CD8-positive, alpha-beta T cell (primary cell): ENCODE measurements at regions of chr18 and their contacts with region 1.

Region 1: GRCh38 chr18:62522504-62523254 is at the start of gene ZCCHC2:
- DNase-seq: peak; percentile 95 to 100 (median 98)
- ATAC-seq: peak; percentile 77
- H3K4me3 ChIP-seq: peak within 1 kb of the TSS; percentile 88 to 89
- H3K4me3 Mint-ChIP-seq: peak within 1 kb of the TSS; percentile 95
- H3K27ac ChIP-seq: peak within 1 kb of the TSS; percentile 86 to 89
- H3K27ac Mint-ChIP-seq: peak within 1 kb of the TSS; percentile 89
- H3K4me1 ChIP-seq: peaks cover 32% of the 10 kb centered on the region
- H3K4me1 Mint-ChIP-seq: peaks cover 37% of the 10 kb centered on the region
- H3K27me3 ChIP-seq: no peaks in the 10 kb centered on the region
- H3K27me3 Mint-ChIP-seq: no peaks in the 10 kb centered on the region
- CTCF ChIP-seq: no peak
- total RNA-seq, gene ZCCHC2: 88.7 to 90.9 TPM

Region 2: GRCh38 chr18:62186774-62187542 is 335.7 kb before region 1 on chr18 and contains the starts of genes PIGN and RELCH:
- CTCF ChIA-PET with region 1: no interaction called
- POLR2A ChIA-PET with region 1: interaction called, 8 read pairs
- intact Hi-C with region 1: loop called (anchors 1 to 5 kb)
- DNase-seq: peak; percentile 89 to 99 (median 93)
- ATAC-seq: peak; percentile 91
- H3K4me3 ChIP-seq: peak within 1 kb of the TSS; percentile 92 to 99
- H3K4me3 Mint-ChIP-seq: peak within 1 kb of the TSS; percentile 100
- H3K27ac ChIP-seq: peak within 1 kb of the TSS; percentile 63 to 79
- H3K27ac Mint-ChIP-seq: peak within 1 kb of the TSS; percentile 97
- H3K4me1 ChIP-seq: peaks cover 43% of the 10 kb centered on the region
- H3K4me1 Mint-ChIP-seq: peaks cover 63% of the 10 kb centered on the region
- H3K27me3 ChIP-seq: no peaks in the 10 kb centered on the region
- H3K27me3 Mint-ChIP-seq: no peaks in the 10 kb centered on the region
- CTCF ChIP-seq: no peak
- total RNA-seq, gene PIGN: 8.1 to 9.9 TPM
- total RNA-seq, gene RELCH: 39.2 to 40.5 TPM

Region 3: DNA sequence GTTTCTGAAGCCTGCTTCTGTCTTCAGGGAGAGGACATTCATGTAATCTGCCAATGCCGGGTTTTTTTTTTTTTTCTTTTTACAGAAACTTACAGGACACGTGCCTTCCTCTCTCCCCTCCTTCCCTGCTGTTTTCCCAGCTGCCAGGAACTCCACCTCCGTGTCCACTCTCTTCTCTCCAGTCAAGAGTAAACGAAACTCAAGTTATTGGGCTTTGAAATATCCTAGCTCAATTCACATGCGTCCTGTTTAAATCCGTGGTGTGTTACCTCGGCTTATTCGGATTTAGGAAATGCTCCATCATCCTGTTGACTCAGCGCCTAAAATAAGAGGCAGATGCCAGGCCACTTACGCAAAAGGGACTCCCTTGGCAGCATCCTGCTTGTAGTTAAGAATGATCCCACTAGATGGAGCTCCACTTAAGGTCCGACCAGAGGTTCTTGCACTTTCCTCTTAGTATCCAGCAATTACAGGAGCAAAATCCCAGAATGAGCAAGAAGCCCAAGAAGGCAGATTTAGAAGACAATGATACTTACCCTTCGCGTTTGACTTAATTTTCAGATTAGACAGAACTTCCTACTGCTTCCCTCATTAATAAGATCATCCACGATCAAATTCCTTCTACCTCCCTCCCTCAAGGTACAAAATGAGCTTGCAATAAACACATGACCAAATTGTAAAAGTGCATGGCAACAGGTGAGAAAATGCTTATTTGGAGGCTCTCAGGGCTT is 97.0 kb before region 1 on chr18:
- CTCF ChIA-PET with region 1: interaction called, 5 read pairs
- POLR2A ChIA-PET with region 1: interaction called, 15 read pairs
- intact Hi-C with region 1: loop called (anchors 1 to 2 kb)
- DNase-seq: peak; percentile 3 to 82 (median 46)
- ATAC-seq: peak; percentile 45
- H3K4me3 ChIP-seq: no peak overlapping the region
- H3K4me3 Mint-ChIP-seq: no peak overlapping the region
- H3K27ac ChIP-seq: no peak overlapping the region
- H3K27ac Mint-ChIP-seq: no peak overlapping the region
- H3K4me1 ChIP-seq: peaks cover 5% of the 10 kb centered on the region
- H3K4me1 Mint-ChIP-seq: peaks cover 17% of the 10 kb centered on the region
- H3K27me3 ChIP-seq: no peaks in the 10 kb centered on the region
- H3K27me3 Mint-ChIP-seq: no peaks in the 10 kb centered on the region
- CTCF ChIP-seq: peak; percentile 87

Region 4: DNA sequence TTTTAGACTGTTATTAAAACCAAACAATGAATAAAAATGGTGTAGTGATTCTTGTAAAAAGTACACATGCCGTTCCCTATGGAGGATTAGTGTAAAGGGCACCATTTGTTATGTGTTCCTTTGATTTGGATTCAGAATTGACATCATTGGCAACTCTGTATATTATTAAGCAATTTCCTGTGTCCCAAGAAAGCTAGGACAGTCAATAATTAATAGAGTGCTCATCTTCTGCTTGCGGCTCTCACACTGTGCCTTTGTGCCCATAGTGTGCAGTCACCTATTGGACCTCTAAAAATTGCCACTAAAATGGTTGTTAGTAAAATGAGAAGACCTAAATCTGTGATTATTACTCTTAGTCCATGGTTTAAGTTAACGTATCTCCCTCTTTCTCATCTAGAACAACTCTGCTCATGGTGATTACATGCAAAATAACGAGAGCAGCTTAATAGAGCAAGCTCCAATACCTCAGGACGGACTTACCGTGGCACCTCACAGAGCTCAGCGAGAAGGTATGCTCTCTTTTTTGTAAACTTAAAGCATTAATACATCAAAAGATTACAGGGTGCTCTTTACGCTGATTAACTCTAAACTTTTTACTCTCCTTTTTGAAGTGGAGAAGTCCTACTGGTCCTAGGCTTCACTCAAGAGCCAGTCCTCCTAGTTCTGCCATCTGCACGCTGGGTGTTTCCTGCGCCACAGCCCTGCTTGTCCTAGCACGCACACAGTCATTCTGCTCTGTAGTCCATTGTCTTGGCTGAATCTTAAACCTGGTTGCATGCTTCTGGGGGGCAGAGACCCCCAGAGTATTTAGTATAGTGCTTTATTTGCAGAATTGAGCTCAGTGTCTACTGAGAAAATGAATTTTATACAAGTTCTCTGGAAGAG is 16.8 kb after region 1 on chr18:
- CTCF ChIA-PET with region 1: no interaction called
- POLR2A ChIA-PET with region 1: interaction called, 4 read pairs
- intact Hi-C with region 1: loop called in 1 of 2 experiments (anchors 1 kb)
- DNase-seq: no peak
- ATAC-seq: no peak
- H3K4me3 ChIP-seq: no peak overlapping the region
- H3K4me3 Mint-ChIP-seq: no peak overlapping the region
- H3K27ac ChIP-seq: no peak overlapping the region
- H3K27ac Mint-ChIP-seq: no peak overlapping the region
- H3K4me1 ChIP-seq: peaks cover 4% of the 10 kb centered on the region
- H3K4me1 Mint-ChIP-seq: peaks cover 47% of the 10 kb centered on the region
- H3K27me3 ChIP-seq: no peaks in the 10 kb centered on the region
- H3K27me3 Mint-ChIP-seq: no peaks in the 10 kb centered on the region
- CTCF ChIP-seq: no peak

Region 5: DNA sequence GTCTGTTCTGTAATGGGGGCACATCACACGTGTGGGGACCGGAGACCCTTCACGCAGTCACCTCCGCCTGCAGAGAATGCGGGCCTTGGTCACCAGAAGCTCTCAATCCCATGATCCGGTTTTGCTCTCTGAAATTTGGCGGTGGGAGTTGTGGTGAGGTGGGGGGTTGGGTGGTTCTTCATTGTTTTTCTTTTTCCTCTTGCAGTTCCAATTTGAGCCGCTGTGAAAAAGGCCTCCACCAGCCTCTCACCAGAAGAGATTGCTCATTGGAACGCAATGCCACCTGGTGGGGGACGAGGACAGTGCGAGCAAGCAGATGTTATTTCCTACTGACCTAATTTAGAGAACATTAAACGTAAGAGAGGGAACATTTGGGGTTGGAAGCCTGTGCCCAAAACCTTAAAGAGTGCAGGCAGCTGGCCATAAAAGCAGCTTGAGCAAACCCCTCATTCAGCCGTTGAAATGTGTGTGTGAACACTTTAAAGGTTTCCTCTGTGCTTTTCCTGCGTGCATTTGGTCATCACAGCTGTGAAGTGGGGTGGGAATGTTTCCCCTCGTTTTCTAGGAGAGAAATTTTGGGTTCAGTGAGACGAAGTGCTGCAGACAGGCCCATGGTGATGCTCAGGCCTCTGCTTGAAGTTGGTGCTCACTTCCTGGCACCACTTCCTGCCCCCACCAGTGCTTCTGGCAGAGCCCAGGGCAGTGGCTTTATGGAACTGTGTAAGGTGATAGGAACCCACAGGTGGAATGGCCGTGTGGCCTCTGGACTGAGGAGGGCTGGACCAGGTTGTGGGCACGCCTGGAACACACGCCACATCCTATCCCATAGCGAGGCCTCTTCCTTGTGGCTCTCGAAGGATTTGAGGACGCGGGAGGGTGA is 61.8 kb after region 1 on chr18:
- CTCF ChIA-PET with region 1: interaction called, 6 read pairs
- POLR2A ChIA-PET with region 1: interaction called, 6 read pairs
- intact Hi-C with region 1: loop called in 1 of 2 experiments (anchors 1 kb)
- DNase-seq: peak; percentile 62 to 91 (median 83)
- ATAC-seq: peak; percentile 99
- H3K4me3 ChIP-seq: no peak overlapping the region
- H3K4me3 Mint-ChIP-seq: peak overlapping the region; percentile 33
- H3K27ac ChIP-seq: peak overlapping the region in 1 of 2 experiments; percentile 30
- H3K27ac Mint-ChIP-seq: peak overlapping the region; percentile 39
- H3K4me1 ChIP-seq: peaks cover 16% of the 10 kb centered on the region
- H3K4me1 Mint-ChIP-seq: peaks cover 29% of the 10 kb centered on the region
- H3K27me3 ChIP-seq: no peaks in the 10 kb centered on the region
- H3K27me3 Mint-ChIP-seq: no peaks in the 10 kb centered on the region
- CTCF ChIP-seq: peak; percentile 98

Region 6: DNA sequence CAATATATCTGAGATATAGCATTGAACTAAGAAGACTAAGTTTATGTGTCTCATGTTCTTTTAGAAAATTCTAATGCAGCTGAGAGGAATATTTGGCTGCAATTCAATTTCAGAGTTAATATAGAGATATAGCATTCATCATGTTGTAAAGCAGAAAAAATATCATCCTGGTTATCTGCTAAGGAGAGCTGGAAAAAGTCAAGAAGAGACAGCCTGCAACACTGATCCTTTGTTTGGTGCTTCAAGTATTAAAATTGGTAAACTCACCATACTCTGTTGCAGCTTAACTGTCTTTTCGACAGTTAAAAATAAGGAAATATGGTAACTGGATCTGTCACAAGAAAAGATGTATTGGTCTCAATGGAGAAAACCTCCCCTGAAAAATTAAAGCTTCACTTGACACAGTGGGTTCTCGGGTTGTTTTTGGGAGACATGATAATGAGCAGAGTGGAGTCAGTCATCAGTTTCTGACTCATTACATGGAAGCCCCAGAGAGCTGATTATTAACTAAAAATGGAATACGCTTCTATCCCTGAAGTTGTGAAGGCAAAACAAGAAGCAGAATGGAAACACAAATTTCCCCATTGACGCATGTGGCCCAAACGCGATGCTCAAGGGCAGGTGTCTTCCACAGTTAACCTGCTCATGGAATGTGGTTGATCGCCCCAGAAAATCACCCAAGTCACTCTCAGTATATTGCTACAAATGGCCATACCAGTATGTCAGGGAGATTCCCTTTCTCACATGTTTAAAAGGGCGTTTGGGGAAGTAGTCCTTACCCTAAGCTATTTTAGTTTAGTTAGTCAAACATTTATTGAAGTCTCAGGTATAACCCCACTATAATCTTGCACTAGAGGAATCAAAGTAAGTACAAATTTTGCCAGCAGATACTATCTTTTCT is 788.7 kb after region 1 on chr18:
- CTCF ChIA-PET with region 1: no interaction called
- POLR2A ChIA-PET with region 1: no interaction called
- intact Hi-C with region 1: loop called (anchors 5 kb)
- DNase-seq: no peak
- ATAC-seq: no peak
- H3K4me3 ChIP-seq: no peak overlapping the region
- H3K4me3 Mint-ChIP-seq: no peak overlapping the region
- H3K27ac ChIP-seq: no peak overlapping the region
- H3K27ac Mint-ChIP-seq: peak overlapping the region; percentile 90
- H3K4me1 ChIP-seq: peaks cover 84% of the 10 kb centered on the region
- H3K4me1 Mint-ChIP-seq: peaks cover 87% of the 10 kb centered on the region
- H3K27me3 ChIP-seq: no peaks in the 10 kb centered on the region
- H3K27me3 Mint-ChIP-seq: no peaks in the 10 kb centered on the region
- CTCF ChIP-seq: no peak

Region 7: DNA sequence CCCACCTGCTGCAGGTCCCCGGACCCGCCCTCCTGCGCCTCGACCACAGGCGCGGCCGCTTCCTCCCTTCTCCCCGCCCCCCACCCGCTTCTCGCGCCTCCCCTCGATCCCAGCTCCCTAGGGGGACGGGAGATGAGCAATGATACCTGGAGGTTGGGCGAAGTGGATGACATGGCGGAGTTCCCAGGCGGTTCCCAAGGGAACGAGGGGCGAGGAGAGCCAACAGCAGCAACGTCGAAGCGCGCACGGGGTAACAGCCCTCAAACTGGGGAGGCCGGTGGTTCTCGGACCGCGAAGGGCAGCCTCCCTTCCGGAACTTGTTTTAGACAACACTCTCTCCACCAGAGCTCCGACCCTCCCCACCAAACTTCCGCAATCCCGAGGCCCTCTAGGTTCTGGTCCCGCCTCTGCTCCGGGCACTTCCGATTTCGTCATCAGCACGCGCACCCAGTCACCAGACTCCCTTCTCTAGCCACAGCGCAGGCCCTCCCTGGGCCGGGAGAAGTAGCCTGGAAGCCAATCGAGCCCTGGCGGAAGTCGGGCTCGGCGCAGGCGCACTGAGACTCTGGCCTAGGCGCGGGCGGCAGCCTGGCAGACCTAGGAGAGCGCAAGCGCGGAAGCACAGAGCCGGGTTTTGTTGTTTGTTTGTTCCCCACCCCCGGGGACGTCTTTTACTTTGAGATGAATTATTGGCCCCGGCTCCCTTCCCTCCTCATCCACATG is 899.6 kb after region 1 on chr18 and contains the start of gene VPS4B:
- CTCF ChIA-PET with region 1: no interaction called
- POLR2A ChIA-PET with region 1: no interaction called
- intact Hi-C with region 1: loop called (anchors 2 to 5 kb)
- DNase-seq: peak; percentile 99 to 100 (median 99)
- ATAC-seq: peak; percentile 91
- H3K4me3 ChIP-seq: peak within 1 kb of the TSS; percentile 87 to 96
- H3K4me3 Mint-ChIP-seq: peak within 1 kb of the TSS; percentile 97
- H3K27ac ChIP-seq: peak within 1 kb of the TSS; percentile 94 to 97
- H3K27ac Mint-ChIP-seq: peak within 1 kb of the TSS; percentile 97
- H3K4me1 ChIP-seq: peaks cover 32% of the 10 kb centered on the region
- H3K4me1 Mint-ChIP-seq: peaks cover 30% of the 10 kb centered on the region
- H3K27me3 ChIP-seq: no peaks in the 10 kb centered on the region
- H3K27me3 Mint-ChIP-seq: no peaks in the 10 kb centered on the region
- CTCF ChIP-seq: no peak
- total RNA-seq, gene VPS4B: 58.5 to 76.2 TPM